ENCODE measurements at regions of chr5 and their contacts with region 1.

Region 1: DNA sequence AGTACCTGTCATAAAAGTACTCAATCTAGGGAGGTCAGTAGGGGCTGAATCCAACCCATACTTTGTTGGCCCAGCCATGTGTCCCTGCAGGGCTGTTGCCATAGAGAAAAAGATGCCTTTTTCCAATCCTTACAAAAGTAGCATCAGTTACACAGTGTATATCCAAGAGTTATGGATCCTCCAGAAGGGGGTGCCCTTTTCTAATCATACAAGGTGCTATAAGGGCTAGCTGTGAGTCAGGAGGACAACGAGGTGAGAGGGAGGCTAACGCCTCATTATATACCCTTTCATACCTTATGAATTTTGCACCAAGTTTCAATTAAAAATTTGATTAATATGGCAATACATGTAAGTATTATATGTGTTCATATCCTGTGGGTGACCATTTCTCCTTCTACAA is 4.8 kb downstream of the KIAA0825 start:
- DNase-seq: peak in 3 of 4 experiments; percentile 16 to 71 (median 39)
- ATAC-seq: peak; percentile 71
- H3K4me3 ChIP-seq: no peak overlapping the region
- H3K27ac ChIP-seq: no peak overlapping the region
- H3K4me1 ChIP-seq: peaks cover 0 to under 1% of the 10 kb centered on the region in 2 experiments; a peak in 2 of 5 replicates
- H3K27me3 ChIP-seq: no peaks in the 10 kb centered on the region
- CTCF ChIP-seq: peak; percentile 39 to 58 (median 56); a peak in 5 of 6 replicates
- EP300 ChIP-seq: no peak
- POLR2A ChIP-seq: no peak
- RAD21 ChIP-seq: peak; percentile 10 to 71; a peak in 2 of 4 replicates

Region 2: GRCh38 chr5:94682814-94683520 is 69.4 kb after region 1 on chr5:
- CTCF ChIA-PET with region 1: no interaction called
- POLR2A ChIA-PET with region 1: no interaction called
- in situ Hi-C with region 1: no loop called
- intact Hi-C with region 1: loop called (anchors 2 kb)
- DNase-seq: no peak
- ATAC-seq: no peak
- H3K4me3 ChIP-seq: no peak overlapping the region
- H3K27ac ChIP-seq: no peak overlapping the region
- H3K4me1 ChIP-seq: no peaks in the 10 kb centered on the region
- H3K27me3 ChIP-seq: no peaks in the 10 kb centered on the region
- CTCF ChIP-seq: no peak
- EP300 ChIP-seq: no peak
- POLR2A ChIP-seq: no peak
- RAD21 ChIP-seq: no peak

Region 3: DNA sequence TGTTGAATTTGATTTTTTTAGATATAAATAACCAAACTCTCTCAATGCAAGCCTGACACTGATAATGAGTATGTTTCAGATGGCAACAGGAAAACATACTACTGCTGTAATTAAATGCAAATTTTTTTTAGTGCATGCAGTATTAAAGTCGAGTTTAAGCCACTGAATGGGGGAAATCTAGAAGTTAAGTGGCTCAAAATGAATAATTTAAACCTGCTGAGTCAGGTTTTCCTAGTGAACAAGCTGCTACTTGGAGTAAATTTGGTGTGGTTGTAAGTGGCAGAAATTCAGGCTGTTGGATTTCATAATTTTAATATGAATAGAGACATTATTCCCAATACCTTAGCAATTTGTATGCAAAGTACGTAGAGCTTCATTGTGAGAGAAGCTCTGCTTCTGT is 126.7 kb after region 1 on chr5:
- CTCF ChIA-PET with region 1: no interaction called
- POLR2A ChIA-PET with region 1: no interaction called
- in situ Hi-C with region 1: no loop called
- intact Hi-C with region 1: loop called (anchors 1 kb)
- DNase-seq: no peak
- ATAC-seq: no peak
- H3K4me3 ChIP-seq: no peak overlapping the region
- H3K27ac ChIP-seq: no peak overlapping the region
- H3K4me1 ChIP-seq: peaks cover 0 to 3% of the 10 kb centered on the region in 2 experiments; a peak in 1 of 5 replicates
- H3K27me3 ChIP-seq: no peaks in the 10 kb centered on the region
- CTCF ChIP-seq: no peak
- EP300 ChIP-seq: no peak
- POLR2A ChIP-seq: no peak
- RAD21 ChIP-seq: no peak

Region 4: DNA sequence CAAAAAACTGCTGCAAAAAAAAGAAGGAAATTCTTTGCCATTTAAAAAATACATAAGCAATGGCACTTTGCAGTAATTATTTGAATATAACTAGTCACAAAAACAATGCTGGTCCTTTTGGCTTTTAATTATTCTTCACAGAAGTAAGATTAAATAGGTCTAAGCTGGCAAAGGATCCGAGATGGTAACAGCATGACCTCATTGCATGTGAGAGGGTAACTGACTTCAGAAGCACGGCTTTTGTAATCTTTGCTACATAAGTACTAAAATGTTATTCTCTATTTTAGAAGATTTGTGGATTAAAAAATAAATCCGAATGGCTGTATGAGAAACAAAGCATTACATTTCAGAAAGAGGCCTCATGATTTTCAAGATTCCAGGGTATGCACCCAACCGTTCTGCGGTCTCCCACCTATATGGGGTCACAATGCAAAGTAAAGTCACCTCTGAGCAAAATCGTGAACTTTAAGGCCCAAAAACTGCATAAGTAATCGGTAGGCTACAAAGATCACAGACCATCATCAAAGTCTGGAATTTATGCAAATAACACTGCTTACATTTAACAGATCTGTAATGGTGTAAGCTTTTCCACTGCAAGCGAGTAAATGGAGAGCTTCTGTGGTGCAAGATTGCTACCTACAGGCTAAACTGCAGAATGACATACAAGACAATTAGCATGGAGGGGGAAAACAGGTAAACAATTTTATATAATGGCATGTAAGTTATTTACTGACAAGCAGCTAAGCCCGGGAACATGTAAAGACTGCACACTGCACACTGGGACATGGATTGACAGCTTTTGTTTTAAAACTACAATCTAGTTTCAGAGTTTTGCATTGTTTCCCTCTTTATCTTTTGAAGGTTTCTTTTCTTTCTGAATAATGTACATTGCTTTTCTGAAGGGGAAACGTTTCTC is 236.5 kb after region 1 on chr5:
- CTCF ChIA-PET with region 1: no interaction called
- POLR2A ChIA-PET with region 1: no interaction called
- in situ Hi-C with region 1: no loop called
- intact Hi-C with region 1: loop called (anchors 5 kb)
- DNase-seq: peak; percentile 9 to 47 (median 20)
- ATAC-seq: peak; percentile 85
- H3K4me3 ChIP-seq: no peak overlapping the region
- H3K27ac ChIP-seq: no peak overlapping the region
- H3K4me1 ChIP-seq: no peaks in the 10 kb centered on the region
- H3K27me3 ChIP-seq: no peaks in the 10 kb centered on the region
- CTCF ChIP-seq: peak; percentile 57 to 83 (median 75)
- EP300 ChIP-seq: no peak
- POLR2A ChIP-seq: no peak
- RAD21 ChIP-seq: peak; percentile 80 to 85

Measured in K562 (cell line).